ENCODE measurements at regions of chr15 and their contacts with region 1.

Region 1: DNA sequence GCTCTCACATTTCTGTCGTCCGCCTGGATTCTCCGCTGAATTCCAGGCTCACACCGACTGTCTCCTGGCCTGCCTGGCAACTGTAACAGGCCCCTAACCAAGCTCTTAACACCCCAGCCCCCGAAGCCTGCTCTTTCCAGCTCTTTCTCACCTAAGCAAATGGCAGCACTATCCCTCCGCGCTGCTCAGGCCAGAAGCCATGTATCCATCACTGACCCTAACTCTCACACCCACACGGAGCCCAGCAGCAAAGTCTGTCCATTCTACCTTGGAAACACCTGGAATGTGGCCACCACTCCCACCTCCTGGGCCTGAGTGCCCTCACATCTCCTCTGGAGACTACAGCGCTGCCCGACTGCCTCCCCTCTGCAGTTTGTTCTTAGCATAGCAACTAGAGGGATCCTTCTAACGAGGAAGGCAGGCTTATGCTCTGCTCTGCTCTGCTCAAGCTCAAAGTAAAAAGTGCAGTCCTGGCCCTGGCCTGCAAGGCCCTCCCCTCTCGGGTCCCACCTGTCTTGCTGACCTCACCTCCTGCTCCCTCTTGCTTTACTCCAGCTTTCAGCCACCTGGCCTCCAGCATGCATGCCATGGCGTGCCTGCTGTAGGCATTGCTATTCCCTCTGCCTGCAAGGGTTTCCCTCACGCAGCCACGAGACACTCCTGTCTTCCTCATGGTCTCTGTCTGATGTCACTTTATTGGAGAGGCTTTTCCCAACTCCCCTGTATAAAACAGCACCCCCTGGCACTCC is 27.2 kb downstream of the FEM1B start:
- DNase-seq: peak in 4 of 7 donors; percentile 12 to 49 (median 16)
- H3K4me3 ChIP-seq: no peak overlapping the region
- H3K27ac ChIP-seq: no peak overlapping the region
- H3K4me1 ChIP-seq: peaks cover 0 to 18% of the 10 kb centered on the region in 2 donors
- H3K27me3 ChIP-seq: no peaks in the 10 kb centered on the region
- CTCF ChIP-seq: no peak
- POLR2A ChIP-seq: no peak

Region 2: GRCh38 chr15:67980773-67981685 is 323.7 kb before region 1 on chr15:
- intact Hi-C with region 1: no loop called
- DNase-seq: no peak
- H3K4me3 ChIP-seq: no peak overlapping the region
- H3K27ac ChIP-seq: no peak overlapping the region
- H3K4me1 ChIP-seq: no peaks in the 10 kb centered on the region
- H3K27me3 ChIP-seq: no peaks in the 10 kb centered on the region
- CTCF ChIP-seq: no peak
- POLR2A ChIP-seq: no peak

Region 3: GRCh38 chr15:68252925-68253534 is 51.7 kb before region 1 on chr15:
- intact Hi-C with region 1: loop called (anchors 5 to 10 kb)
- DNase-seq: peak in 4 of 7 donors; percentile 48 to 72 (median 64)
- H3K4me3 ChIP-seq: peak overlapping the region in 1 of 4 donors; percentile 4
- H3K27ac ChIP-seq: no peak overlapping the region
- H3K4me1 ChIP-seq: peaks cover 3 to 5% of the 10 kb centered on the region in 2 donors
- H3K27me3 ChIP-seq: no peaks in the 10 kb centered on the region
- CTCF ChIP-seq: peak; percentile 78 to 94 (median 90)
- POLR2A ChIP-seq: no peak

Region 4: DNA sequence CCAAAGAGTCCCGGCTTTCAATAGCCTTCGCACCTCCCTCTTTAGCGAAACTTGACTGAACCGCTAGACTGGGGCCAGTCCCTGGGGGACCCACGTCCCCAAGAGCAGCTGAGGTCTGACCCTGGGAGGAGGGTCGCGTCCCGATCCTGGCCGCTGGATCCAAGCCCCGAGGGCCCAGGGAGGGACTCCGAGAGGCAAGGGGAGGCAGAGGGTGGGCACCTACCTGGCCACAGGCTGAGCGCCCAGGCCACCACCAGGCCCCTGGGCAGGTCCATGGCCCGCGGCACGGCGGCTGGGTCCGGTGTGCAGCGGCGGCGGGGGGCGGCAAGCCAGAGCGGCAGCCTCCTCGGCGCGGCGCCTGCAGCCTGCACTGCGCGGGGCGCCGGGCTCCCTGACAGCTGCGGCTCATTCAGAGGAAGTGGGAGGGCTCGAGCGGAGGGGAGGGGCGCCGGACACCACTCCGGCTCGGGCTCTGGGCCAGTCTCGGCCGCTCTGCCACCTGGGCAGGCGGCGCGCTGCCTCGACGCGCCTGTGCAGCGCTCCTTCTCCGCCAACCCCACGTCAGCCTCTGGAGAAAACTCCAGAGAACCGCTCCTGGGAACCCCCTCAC is 127.1 kb after region 1 on chr15 and contains the start of gene ITGA11:
- intact Hi-C with region 1: no loop called
- DNase-seq: peak; percentile 32 to 68 (median 52)
- H3K4me3 ChIP-seq: peak within 1 kb of the TSS in 1 of 4 donors; percentile 68
- H3K27ac ChIP-seq: peak within 1 kb of the TSS in 2 of 5 donors; percentile 41 to 73
- H3K4me1 ChIP-seq: peaks cover 0 to 9% of the 10 kb centered on the region in 2 donors
- H3K27me3 ChIP-seq: peaks cover 19% of the 10 kb centered on the region
- CTCF ChIP-seq: no peak
- POLR2A ChIP-seq: peak in 1 of 2 donors; percentile 17
- total RNA-seq, gene ITGA11: 4.4 to 52.5 (median 9.3) TPM

Region 5: DNA sequence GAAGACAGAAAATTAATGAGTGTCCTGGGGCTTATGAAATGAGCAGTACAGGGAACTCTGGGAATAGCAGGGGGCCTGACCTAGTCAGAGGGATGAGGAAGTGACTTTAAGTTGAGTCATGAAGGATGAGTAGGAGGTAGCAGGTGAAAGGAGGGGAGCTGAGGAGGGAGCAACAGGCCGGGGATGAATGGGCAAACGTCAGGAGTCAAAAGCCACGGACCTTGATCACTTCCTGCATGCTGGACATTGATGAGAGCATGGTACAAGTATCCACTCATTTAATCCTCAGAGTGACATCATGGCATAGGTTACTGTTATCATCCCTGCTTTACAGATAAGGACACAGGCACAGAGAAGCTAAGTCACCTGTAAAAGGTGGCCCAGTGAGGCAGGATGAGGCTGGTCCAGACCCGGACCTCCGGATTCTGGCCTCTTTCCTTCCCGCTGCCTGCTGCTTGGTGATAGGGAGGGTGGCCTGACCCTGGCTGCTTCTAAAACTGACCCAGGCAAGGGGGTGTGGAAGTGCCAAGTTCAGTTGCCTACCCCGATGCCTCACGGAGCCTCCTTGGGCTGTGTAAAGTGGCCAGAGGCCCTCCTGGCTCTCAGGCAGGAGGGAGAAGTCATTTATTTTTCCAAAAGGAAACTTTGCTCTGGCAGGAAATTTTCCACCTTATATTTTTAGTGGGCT is 281.7 kb after region 1 on chr15:
- intact Hi-C with region 1: no loop called
- DNase-seq: no peak
- H3K4me3 ChIP-seq: no peak overlapping the region
- H3K27ac ChIP-seq: peak overlapping the region in 2 of 5 donors; percentile 30 to 82
- H3K4me1 ChIP-seq: peaks cover 0 to 15% of the 10 kb centered on the region in 2 donors
- H3K27me3 ChIP-seq: no peaks in the 10 kb centered on the region
- CTCF ChIP-seq: no peak
- POLR2A ChIP-seq: no peak

Region 6: GRCh38 chr15:68672781-68673205 is 368.0 kb after region 1 on chr15:
- intact Hi-C with region 1: loop called in 1 of 2 experiments (anchors 10 kb)
- DNase-seq: no peak
- H3K4me3 ChIP-seq: no peak overlapping the region
- H3K27ac ChIP-seq: no peak overlapping the region
- H3K4me1 ChIP-seq: no peaks in the 10 kb centered on the region
- H3K27me3 ChIP-seq: no peaks in the 10 kb centered on the region
- CTCF ChIP-seq: no peak
- POLR2A ChIP-seq: no peak

Measured in adrenal gland (tissue), 19 donors.